ENCODE measurements at regions of chr3 and their contacts with region 1.

Region 1: DNA sequence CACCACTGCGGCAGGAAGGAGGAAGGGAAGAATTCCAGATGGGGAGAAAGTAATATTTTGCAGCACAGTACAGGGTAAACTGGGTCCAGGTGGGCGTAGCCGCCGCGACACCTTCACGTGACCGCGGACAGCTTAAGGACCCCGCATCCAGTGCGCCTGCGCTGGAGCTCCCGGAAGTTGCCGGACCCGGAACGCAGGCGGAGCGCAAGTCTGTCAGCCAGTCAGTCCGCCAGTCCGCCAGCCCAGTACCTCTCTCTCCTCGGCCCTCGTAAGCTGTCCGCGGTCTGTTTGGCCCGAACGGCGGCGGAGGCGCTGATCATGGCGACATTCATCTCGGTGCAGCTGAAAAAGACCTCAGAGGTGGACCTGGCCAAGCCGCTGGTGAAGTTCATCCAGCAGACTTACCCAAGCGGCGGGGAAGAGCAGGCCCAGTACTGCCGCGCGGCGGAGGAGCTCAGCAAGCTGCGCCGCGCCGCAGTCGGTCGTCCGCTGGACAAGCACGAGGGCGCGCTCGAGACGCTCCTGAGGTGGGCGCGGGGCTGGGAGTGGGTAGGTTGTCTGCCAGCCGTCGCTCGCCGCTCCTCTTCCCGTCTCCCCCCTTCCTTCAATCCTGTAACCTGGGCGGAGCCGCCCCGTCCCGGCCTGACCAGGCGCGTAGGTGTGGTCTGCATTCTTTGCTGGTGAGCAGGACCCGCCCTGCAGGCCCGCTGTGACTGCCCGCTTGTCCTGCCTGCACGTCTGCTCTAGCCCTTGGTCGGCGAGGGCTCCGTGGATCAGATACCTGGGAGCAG is at the start of gene PDCD6IP:
- DNase-seq: peak; percentile 89
- ATAC-seq: peak; percentile 98
- H3K4me3 ChIP-seq: peak within 1 kb of the TSS; percentile 94 to 97 (median 94)
- H3K27ac ChIP-seq: peak within 1 kb of the TSS; percentile 93
- H3K4me1 ChIP-seq: peaks cover 48% of the 10 kb centered on the region
- H3K27me3 ChIP-seq: no peaks in the 10 kb centered on the region; a peak in 1 of 5 replicates
- CTCF ChIP-seq: peak; percentile 53
- EP300 ChIP-seq: no peak; a peak in 2 of 4 replicates
- POLR2A ChIP-seq: peak; percentile 96 to 97
- RAD21 ChIP-seq: peak; percentile 36; the same call in 1 of the 2 replicates
- total RNA-seq, gene PDCD6IP: 62.5 and 116 TPM in 2 replicates

Region 2: GRCh38 chr3:33810545-33810944 is 11.9 kb after region 1 on chr3:
- CTCF ChIA-PET with region 1: no interaction called
- POLR2A ChIA-PET with region 1: interaction called, 12 read pairs
- in situ Hi-C with region 1: no loop called
- intact Hi-C with region 1: no loop called
- DNase-seq: peak; percentile 38
- ATAC-seq: peak; percentile 94
- H3K4me3 ChIP-seq: no peak overlapping the region
- H3K27ac ChIP-seq: peak overlapping the region; percentile 55
- H3K4me1 ChIP-seq: peaks cover 31% of the 10 kb centered on the region
- H3K27me3 ChIP-seq: no peaks in the 10 kb centered on the region; a peak in 1 of 5 replicates
- CTCF ChIP-seq: no peak
- EP300 ChIP-seq: no peak
- POLR2A ChIP-seq: no peak
- RAD21 ChIP-seq: no peak

Region 3: GRCh38 chr3:33833408-33834095 is 34.9 kb after region 1 on chr3:
- CTCF ChIA-PET with region 1: no interaction called
- POLR2A ChIA-PET with region 1: no interaction called
- in situ Hi-C with region 1: no loop called
- intact Hi-C with region 1: no loop called
- DNase-seq: no peak
- ATAC-seq: no peak
- H3K4me3 ChIP-seq: no peak overlapping the region
- H3K27ac ChIP-seq: no peak overlapping the region
- H3K4me1 ChIP-seq: no peaks in the 10 kb centered on the region
- H3K27me3 ChIP-seq: no peaks in the 10 kb centered on the region
- CTCF ChIP-seq: no peak
- EP300 ChIP-seq: no peak
- POLR2A ChIP-seq: no peak
- RAD21 ChIP-seq: no peak